ENCODE measurements at regions of chr12 and their contacts with region 1.

Region 1: GRCh38 chr12:2034633-2035430 is 18.0 kb upstream of the CACNA1C start:
- DNase-seq: no peak
- H3K4me3 ChIP-seq: peak overlapping the region; percentile 55
- H3K27ac ChIP-seq: no peak overlapping the region
- H3K27me3 ChIP-seq: peaks cover 32% of the 10 kb centered on the region
- CTCF ChIP-seq: peak; percentile 72

Region 2: DNA sequence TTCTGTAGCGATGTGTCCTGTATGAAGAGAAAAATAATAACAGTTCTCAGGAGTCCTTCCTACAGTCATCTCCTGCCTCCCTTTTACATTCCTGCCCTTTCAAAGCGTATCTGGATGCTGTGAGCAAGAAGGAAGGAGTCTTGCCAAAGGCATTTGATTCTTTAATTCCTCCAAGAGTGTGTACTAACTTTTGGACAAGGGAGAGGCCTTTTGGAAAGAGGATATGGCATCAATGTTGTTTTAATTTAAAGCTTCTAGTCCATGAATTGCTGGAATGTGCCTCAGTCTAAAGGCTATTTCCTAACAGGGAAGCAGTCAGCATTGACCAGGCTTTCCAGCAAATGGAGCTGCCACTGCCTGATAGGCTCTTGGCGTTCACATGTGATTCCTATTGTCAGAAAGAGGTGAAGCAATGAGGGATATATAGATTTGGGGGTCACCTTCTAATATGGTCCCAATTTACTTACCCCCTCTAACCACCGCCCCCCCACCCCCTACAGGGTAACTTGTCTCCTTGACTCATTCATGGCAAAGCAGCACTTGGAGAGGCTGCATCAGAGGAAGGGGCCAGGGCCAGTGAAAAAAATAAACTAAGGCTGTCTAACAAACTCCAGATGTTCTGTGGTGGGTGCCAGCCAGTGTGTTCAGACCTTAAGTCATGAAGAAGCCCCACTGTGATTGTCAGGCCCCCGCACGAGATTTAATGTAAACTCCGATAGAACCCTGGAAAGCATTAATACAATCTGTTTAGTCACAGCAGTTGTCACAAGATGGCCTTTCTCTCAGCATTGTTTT is 660.7 kb before region 1 on chr12:
- CTCF ChIA-PET with region 1: no interaction called
- POLR2A ChIA-PET with region 1: no interaction called
- DNase-seq: peak; percentile 26
- H3K4me3 ChIP-seq: no peak overlapping the region
- H3K27ac ChIP-seq: no peak overlapping the region
- H3K27me3 ChIP-seq: no peaks in the 10 kb centered on the region
- CTCF ChIP-seq: no peak

Region 3: DNA sequence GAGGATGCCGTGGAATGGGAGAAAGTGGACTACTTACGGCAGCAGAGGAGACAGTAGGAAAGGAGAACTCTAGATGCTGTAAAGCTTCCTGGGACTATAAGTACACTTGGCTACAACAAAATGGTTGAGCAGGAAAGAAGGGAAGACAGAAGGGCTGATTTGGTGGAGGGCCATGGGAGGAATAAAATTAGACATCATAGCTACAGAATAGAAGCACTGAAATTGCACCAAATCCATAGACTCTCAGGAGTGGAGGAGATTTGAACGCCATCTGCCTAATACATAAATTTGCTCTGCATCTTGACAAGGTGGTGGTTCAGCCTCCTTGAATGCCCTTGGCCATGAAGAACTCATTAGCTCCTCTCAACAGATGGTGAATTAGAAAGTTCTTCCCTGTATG is 14.3 kb before region 1 on chr12:
- CTCF ChIA-PET with region 1: interaction called, 10 read pairs
- POLR2A ChIA-PET with region 1: no interaction called
- DNase-seq: no peak
- H3K4me3 ChIP-seq: no peak overlapping the region
- H3K27ac ChIP-seq: no peak overlapping the region
- H3K27me3 ChIP-seq: peaks cover 33% of the 10 kb centered on the region
- CTCF ChIP-seq: no peak

Region 4: GRCh38 chr12:2094597-2094996 is 59.8 kb after region 1 on chr12:
- CTCF ChIA-PET with region 1: no interaction called
- POLR2A ChIA-PET with region 1: no interaction called
- DNase-seq: no peak
- H3K4me3 ChIP-seq: no peak overlapping the region
- H3K27ac ChIP-seq: no peak overlapping the region
- H3K27me3 ChIP-seq: no peaks in the 10 kb centered on the region
- CTCF ChIP-seq: no peak